IMR-90 (cell line): ENCODE measurements at regions of chr5 and their contacts with region 1.

Region 1: DNA sequence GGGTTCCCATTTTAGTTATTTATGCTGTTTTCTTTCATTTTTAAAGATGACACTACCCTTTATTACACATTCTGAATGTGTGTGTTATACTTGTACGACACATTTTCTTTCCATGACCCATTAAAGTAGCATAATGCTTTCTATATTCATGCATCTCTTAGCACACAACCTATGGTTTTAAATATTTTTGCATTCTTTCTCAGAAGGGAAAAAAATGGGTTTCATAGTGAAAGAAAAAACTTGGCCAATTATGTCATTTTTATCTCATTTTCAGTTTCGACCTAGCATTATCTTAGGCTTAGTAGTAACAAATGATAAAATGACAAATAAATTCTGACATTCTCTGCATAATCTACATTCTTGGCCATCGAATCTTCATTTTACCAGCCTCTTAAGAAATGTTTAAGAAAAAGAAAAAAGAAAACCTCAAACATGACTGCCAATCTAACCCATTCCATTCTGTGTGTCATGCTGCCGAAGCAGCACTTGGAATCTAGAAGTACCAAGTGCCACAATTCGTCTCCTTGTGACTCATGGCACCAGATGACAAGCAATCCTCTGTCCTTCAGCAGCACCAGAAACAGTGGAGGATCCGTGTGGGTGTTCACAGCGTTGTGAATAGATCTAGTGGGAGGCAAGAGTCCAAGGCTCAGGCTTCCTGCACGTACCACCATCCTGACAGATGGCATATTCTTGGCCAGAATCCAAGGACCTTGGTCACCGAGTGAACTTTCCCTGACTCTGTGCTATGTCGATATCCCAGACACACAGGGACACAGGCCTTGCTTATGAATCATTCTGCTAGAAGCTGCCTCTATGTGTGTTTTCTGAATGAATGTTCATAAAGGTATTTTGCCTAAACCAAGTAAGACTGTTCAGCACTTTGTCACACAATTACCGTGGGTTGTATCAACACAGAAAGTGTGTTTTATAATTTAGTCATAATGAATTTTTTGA is 502.7 kb downstream of the NR2F1-AS1 start:
- DNase-seq: peak; percentile 93
- ATAC-seq: peak; percentile 82
- H3K4me3 ChIP-seq: peak overlapping the region; percentile 29
- H3K27ac ChIP-seq: peak overlapping the region; percentile 97
- H3K4me1 ChIP-seq: peaks cover 4% of the 10 kb centered on the region
- H3K27me3 ChIP-seq: no peaks in the 10 kb centered on the region
- CTCF ChIP-seq: no peak
- POLR2A ChIP-seq: no peak
- RAD21 ChIP-seq: no peak; the same call in 1 of the 2 replicates

Region 2: DNA sequence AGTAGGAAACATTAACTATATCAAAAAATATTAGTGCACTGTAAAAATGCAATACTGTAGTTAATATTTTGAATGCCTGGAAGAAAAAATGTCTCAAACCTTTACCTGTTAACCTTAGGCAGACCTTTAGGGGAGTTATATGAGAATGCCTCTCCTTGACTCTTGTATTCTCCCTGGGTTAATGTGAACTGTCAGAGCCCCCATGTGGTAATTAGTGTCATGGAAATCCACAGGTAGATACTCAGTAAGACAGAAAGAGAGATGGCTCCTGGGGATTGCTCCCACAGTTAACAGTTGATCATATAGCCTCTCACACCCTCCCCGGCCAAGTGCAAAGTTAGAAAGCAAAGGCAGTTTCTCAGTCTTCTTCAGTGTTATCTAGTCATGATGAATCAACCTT is 240.1 kb before region 1 on chr5:
- CTCF ChIA-PET with region 1: no interaction called
- POLR2A ChIA-PET with region 1: no interaction called
- dilution Hi-C with region 1: no loop called
- in situ Hi-C with region 1: no loop called
- intact Hi-C with region 1: loop called (anchors 10 kb)
- DNase-seq: no peak
- ATAC-seq: no peak
- H3K4me3 ChIP-seq: no peak overlapping the region
- H3K27ac ChIP-seq: peak overlapping the region; percentile 75; the same call in 1 of the 2 replicates
- H3K4me1 ChIP-seq: peaks cover 9% of the 10 kb centered on the region
- H3K27me3 ChIP-seq: no peaks in the 10 kb centered on the region
- CTCF ChIP-seq: 0 out of 2 replicates have a peak, but pooled peaks have one; percentile 4
- POLR2A ChIP-seq: no peak
- RAD21 ChIP-seq: no peak

Region 3: DNA sequence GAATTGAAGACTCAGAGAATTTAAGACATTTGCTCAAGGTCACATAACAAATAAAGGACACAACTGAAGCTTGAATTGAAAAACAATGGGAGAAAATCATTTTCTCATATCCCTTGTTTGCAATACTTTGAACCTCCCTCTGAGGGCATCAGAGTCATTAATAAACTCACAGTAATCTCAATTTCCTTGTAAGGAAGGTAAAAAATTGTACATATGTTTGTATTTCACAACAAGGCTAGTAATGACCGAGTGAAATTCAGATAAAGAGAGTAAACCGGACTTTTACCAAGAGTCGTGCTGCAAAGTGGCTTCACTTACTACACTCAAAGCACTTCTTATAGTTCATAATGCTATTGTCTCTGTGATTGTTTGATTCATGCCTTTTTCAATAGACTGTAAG is 162.3 kb before region 1 on chr5:
- CTCF ChIA-PET with region 1: no interaction called
- POLR2A ChIA-PET with region 1: no interaction called
- dilution Hi-C with region 1: no loop called
- in situ Hi-C with region 1: no loop called
- intact Hi-C with region 1: loop called (anchors 5 kb)
- DNase-seq: peak; percentile 44
- ATAC-seq: peak; percentile 49
- H3K4me3 ChIP-seq: no peak overlapping the region
- H3K27ac ChIP-seq: no peak overlapping the region
- H3K4me1 ChIP-seq: peaks cover 2% of the 10 kb centered on the region; the same call in 1 of the 2 replicates
- H3K27me3 ChIP-seq: no peaks in the 10 kb centered on the region
- CTCF ChIP-seq: peak; percentile 44
- POLR2A ChIP-seq: no peak
- RAD21 ChIP-seq: peak; percentile 43

Region 4: DNA sequence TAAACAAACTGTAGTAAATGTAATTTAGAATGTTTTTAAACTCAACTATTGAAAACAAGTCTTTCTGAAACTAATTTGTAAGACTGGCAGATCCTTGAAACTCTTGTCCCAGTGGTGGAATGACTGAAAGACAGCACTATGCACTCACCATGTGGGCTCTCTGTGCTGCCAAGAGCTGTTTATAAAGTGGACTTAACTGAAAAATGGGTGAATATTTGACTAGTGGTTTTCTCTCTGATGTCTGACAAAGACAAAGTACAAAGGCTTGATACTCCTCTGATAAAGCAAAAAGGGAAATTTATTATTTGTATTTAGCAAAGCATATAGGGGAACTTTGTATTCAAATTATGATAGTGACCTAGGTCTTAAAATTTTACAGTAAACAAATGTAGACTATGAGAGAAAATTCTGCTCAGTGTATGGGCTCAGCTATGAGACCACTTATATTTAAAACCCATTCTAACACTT is 132.7 kb before region 1 on chr5:
- CTCF ChIA-PET with region 1: no interaction called
- POLR2A ChIA-PET with region 1: no interaction called
- dilution Hi-C with region 1: no loop called
- in situ Hi-C with region 1: no loop called
- intact Hi-C with region 1: no loop called
- DNase-seq: peak; percentile 28
- ATAC-seq: peak; percentile 61
- H3K4me3 ChIP-seq: no peak overlapping the region
- H3K27ac ChIP-seq: peak overlapping the region; percentile 64; the same call in 1 of the 2 replicates
- H3K4me1 ChIP-seq: 0 out of 2 replicates have a peak, but pooled peaks cover 1% of the 10 kb centered on the region
- H3K27me3 ChIP-seq: no peaks in the 10 kb centered on the region
- CTCF ChIP-seq: no peak
- POLR2A ChIP-seq: no peak
- RAD21 ChIP-seq: no peak

Region 5: GRCh38 chr5:93117751-93118531 is 39.6 kb after region 1 on chr5:
- CTCF ChIA-PET with region 1: no interaction called
- POLR2A ChIA-PET with region 1: no interaction called
- dilution Hi-C with region 1: no loop called
- in situ Hi-C with region 1: no loop called
- intact Hi-C with region 1: no loop called
- DNase-seq: peak; percentile 77
- ATAC-seq: peak; percentile 86
- H3K4me3 ChIP-seq: no peak overlapping the region
- H3K27ac ChIP-seq: no peak overlapping the region
- H3K4me1 ChIP-seq: peaks cover 3% of the 10 kb centered on the region
- H3K27me3 ChIP-seq: no peaks in the 10 kb centered on the region
- CTCF ChIP-seq: no peak
- POLR2A ChIP-seq: no peak
- RAD21 ChIP-seq: no peak

Region 6: DNA sequence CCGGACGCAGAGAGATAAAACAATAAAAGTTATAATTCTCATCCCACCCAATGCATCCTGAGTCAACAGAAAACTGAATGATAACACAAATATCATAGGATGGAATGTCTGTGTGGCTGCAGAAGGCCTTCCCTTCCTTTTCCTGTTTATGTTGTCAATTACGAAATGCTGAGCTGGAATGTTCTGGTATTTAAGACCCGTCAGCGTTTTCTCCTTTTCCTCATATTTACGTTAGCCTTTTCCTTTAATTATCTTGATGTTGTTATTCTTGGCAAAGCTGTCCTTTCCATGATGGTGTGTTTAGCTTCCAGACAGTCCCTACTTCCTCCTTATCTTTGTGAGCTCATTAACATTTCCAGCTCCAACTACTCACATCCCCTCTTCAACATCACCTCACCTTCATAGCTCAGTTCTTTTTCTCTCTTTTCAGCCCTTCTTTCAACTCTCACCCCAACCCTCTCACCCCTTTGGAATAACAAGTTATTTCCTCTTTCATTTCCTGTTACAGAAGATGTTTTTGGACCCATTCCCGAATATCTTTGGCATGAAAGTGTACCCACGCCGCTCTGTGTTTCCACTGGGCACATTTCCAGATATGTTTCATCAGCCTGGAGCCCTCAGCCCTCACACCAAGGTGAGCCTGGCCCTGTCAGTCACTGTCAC is 281.1 kb after region 1 on chr5:
- CTCF ChIA-PET with region 1: no interaction called
- POLR2A ChIA-PET with region 1: no interaction called
- dilution Hi-C with region 1: no loop called
- in situ Hi-C with region 1: no loop called
- intact Hi-C with region 1: loop called (anchors 10 kb)
- DNase-seq: peak; percentile 91
- ATAC-seq: peak; percentile 93
- H3K4me3 ChIP-seq: no peak overlapping the region
- H3K27ac ChIP-seq: peak overlapping the region; percentile 74
- H3K4me1 ChIP-seq: peaks cover 3% of the 10 kb centered on the region
- H3K27me3 ChIP-seq: no peaks in the 10 kb centered on the region
- CTCF ChIP-seq: no peak
- POLR2A ChIP-seq: no peak
- RAD21 ChIP-seq: no peak

Region 7: GRCh38 chr5:93589829-93590215 is 511.5 kb after region 1 on chr5:
- CTCF ChIA-PET with region 1: no interaction called
- POLR2A ChIA-PET with region 1: no interaction called
- dilution Hi-C with region 1: no loop called
- in situ Hi-C with region 1: no loop called
- intact Hi-C with region 1: no loop called
- DNase-seq: no peak
- ATAC-seq: no peak
- H3K4me3 ChIP-seq: peak overlapping the region; percentile 33
- H3K27ac ChIP-seq: peak overlapping the region; percentile 99
- H3K4me1 ChIP-seq: peaks cover 25% of the 10 kb centered on the region
- H3K27me3 ChIP-seq: no peaks in the 10 kb centered on the region
- CTCF ChIP-seq: 0 out of 2 replicates have a peak, but pooled peaks have one; percentile 2
- POLR2A ChIP-seq: no peak
- RAD21 ChIP-seq: no peak